ENCODE measurements at regions of chr2 and their contacts with region 1.

Region 1: GRCh38 chr2:190578158-190579057 is 43.9 kb upstream of the NEMP2 start:
- DNase-seq: peak; percentile 95
- H3K4me3 Mint-ChIP-seq: peak overlapping the region; percentile 60
- H3K27ac Mint-ChIP-seq: peak overlapping the region; percentile 81
- H3K4me1 Mint-ChIP-seq: peaks cover 53% of the 10 kb centered on the region
- H3K27me3 Mint-ChIP-seq: no peaks in the 10 kb centered on the region
- CTCF ChIP-seq: no peak

Region 2: GRCh38 chr2:190365499-190366204 is 212.8 kb before region 1 on chr2:
- CTCF ChIA-PET with region 1: no interaction called
- POLR2A ChIA-PET with region 1: no interaction called
- intact Hi-C with region 1: no loop called
- DNase-seq: no peak
- H3K4me3 Mint-ChIP-seq: no peak overlapping the region
- H3K27ac Mint-ChIP-seq: no peak overlapping the region
- H3K4me1 Mint-ChIP-seq: no peaks in the 10 kb centered on the region
- H3K27me3 Mint-ChIP-seq: no peaks in the 10 kb centered on the region
- CTCF ChIP-seq: no peak

Region 3: GRCh38 chr2:190551928-190552327 is 26.5 kb before region 1 on chr2:
- CTCF ChIA-PET with region 1: interaction called, 5 read pairs
- POLR2A ChIA-PET with region 1: interaction called, 227 read pairs
- intact Hi-C with region 1: no loop called
- DNase-seq: peak; percentile 90
- H3K4me3 Mint-ChIP-seq: no peak overlapping the region
- H3K27ac Mint-ChIP-seq: peak overlapping the region; percentile 95
- H3K4me1 Mint-ChIP-seq: peaks cover 27% of the 10 kb centered on the region
- H3K27me3 Mint-ChIP-seq: no peaks in the 10 kb centered on the region
- CTCF ChIP-seq: no peak

Region 4: GRCh38 chr2:190599073-190599472 is 20.7 kb after region 1 on chr2:
- CTCF ChIA-PET with region 1: interaction called, 8 read pairs
- POLR2A ChIA-PET with region 1: interaction called, 96 read pairs
- intact Hi-C with region 1: no loop called
- DNase-seq: no peak
- H3K4me3 Mint-ChIP-seq: no peak overlapping the region
- H3K27ac Mint-ChIP-seq: no peak overlapping the region
- H3K4me1 Mint-ChIP-seq: peaks cover 55% of the 10 kb centered on the region
- H3K27me3 Mint-ChIP-seq: no peaks in the 10 kb centered on the region
- CTCF ChIP-seq: no peak

Region 5: GRCh38 chr2:190636373-190636772 is 58.0 kb after region 1 on chr2:
- CTCF ChIA-PET with region 1: interaction called, 3 read pairs
- POLR2A ChIA-PET with region 1: interaction called, 15 read pairs
- intact Hi-C with region 1: no loop called
- DNase-seq: peak; percentile 83
- H3K4me3 Mint-ChIP-seq: no peak overlapping the region
- H3K27ac Mint-ChIP-seq: peak overlapping the region; percentile 80
- H3K4me1 Mint-ChIP-seq: peaks cover 50% of the 10 kb centered on the region
- H3K27me3 Mint-ChIP-seq: no peaks in the 10 kb centered on the region
- CTCF ChIP-seq: no peak

Region 6: GRCh38 chr2:190718652-190719526 is 140.5 kb after region 1 on chr2:
- CTCF ChIA-PET with region 1: no interaction called
- POLR2A ChIA-PET with region 1: no interaction called
- intact Hi-C with region 1: no loop called
- DNase-seq: peak; percentile 88
- H3K4me3 Mint-ChIP-seq: no peak overlapping the region
- H3K27ac Mint-ChIP-seq: no peak overlapping the region
- H3K4me1 Mint-ChIP-seq: peaks cover 20% of the 10 kb centered on the region
- H3K27me3 Mint-ChIP-seq: no peaks in the 10 kb centered on the region
- CTCF ChIP-seq: no peak

Measured in MCF 10A (cell line).